ENCODE measurements at regions of chr5 and their contacts with region 1.

Region 1: GRCh38 chr5:33369485-33370472 is 71.0 kb upstream of the TARS1 start:
- DNase-seq: no peak

Region 2: DNA sequence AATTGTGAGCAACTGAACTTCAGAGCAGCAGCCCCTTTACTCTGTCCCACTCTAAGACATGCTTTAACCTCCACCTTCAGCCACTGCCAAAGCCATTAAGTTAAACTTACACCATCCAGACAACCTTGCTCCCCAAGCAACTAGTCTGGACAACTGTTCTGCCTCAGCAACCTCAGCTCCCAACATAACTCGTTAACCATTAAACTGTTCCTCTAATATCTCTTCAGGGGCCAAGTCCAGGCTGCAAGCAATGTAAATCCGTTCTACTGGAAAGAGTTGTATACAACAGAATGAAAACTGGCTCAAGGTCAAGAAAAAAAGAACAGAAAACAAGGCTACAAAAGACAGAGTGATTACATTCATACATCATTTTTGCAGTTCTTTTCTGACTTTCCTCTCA is 60.7 kb before region 1 on chr5:
- intact Hi-C with region 1: loop called (anchors 5 kb)
- DNase-seq: no peak

Region 3: DNA sequence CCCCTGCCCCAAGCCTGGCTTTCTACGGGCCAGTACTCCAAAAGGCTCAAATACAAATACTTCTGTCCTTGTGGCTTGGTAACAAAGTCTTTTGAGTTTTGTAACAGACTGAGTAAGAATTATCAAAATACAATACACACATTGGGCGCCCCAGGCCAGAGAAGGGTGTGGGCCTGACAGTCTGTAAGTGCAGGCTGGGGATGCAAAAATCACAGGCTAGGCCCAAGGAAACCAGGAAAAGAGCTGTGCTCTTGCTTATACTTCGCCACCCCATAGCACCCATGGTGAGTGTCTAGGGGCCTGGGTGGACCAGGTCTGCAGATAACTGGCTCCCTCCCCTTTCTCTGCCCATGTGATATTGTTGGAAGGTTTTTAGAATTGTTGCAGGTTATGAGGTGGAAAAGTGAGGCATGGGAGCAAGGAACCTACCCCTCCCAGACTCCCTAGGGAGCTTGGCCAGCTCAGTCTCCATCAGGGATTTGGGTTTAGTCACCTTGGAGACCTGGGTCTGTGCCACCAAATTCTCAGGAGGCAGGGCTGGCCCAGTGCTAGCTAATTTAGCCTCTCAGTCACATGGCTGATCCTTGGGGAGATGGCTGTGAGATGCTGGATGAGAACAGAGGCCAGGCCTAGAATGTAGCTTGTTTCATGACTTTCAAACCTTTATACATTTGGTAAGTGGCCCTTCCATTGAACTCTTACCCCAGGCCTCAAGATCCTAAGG is 143.8 kb after region 1 on chr5:
- intact Hi-C with region 1: no loop called
- DNase-seq: no peak